ENCODE measurements at regions of chr17 and their contacts with region 1.

Region 1: GRCh38 chr17:81498953-81499600 is 13.5 kb downstream of the ACTG1 start:
- DNase-seq: no peak
- H3K4me3 Mint-ChIP-seq: no peak overlapping the region
- H3K27ac Mint-ChIP-seq: no peak overlapping the region
- H3K4me1 Mint-ChIP-seq: peaks cover 9% of the 10 kb centered on the region
- H3K27me3 Mint-ChIP-seq: peaks cover 28% of the 10 kb centered on the region

Region 2: GRCh38 chr17:81484195-81484979 is 14.7 kb before region 1 on chr17:
- CTCF ChIA-PET with region 1: interaction called, 11 read pairs
- POLR2A ChIA-PET with region 1: no interaction called
- DNase-seq: peak; percentile 88
- H3K4me3 Mint-ChIP-seq: peak overlapping the region; percentile 13
- H3K27ac Mint-ChIP-seq: no peak overlapping the region
- H3K4me1 Mint-ChIP-seq: peaks cover 19% of the 10 kb centered on the region
- H3K27me3 Mint-ChIP-seq: peaks cover 26% of the 10 kb centered on the region

Region 3: DNA sequence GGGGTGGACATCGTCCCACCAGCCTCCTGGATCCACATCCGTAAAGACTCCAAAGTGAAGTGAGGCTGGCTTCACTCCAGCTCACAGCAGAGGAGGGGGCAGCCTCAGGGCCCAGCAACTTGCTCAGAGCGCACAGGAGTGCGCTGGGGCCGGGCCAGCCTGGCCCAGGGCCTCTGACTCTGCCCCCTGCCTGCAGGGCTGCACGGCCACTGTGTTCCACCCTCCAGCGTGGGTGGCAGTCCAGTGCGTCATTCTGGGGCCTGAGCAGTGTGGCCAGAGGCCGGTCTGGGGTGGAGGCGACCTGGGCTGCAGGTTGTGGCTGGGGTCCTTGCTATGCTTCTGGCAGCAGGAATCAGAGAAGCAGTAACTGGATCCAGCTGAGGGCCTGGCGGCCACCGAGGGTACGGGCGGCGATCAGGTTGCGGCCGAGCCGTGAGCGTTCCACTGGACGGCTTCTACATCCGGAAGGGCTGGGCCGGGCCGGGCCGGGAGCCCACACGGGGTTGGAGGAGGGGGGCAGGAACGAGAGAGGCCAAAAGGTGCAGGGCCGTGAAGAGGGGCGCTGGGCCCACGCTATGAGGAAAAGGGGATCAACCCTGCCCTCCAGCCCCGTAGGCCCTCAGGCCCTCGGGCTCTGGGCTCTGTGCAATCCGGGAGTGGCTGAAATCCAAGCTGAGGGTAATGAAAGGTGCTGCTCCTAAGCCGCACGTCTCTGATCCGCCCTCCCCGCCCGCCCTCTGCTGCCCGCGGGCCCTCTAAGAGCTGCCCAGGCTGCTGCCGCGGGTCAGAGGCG is 28.7 kb after region 1 on chr17 and contains the start of gene FSCN2:
- CTCF ChIA-PET with region 1: no interaction called
- POLR2A ChIA-PET with region 1: no interaction called
- DNase-seq: no peak
- H3K4me3 Mint-ChIP-seq: no peak within 1 kb of the TSS
- H3K27ac Mint-ChIP-seq: no peak within 1 kb of the TSS
- H3K4me1 Mint-ChIP-seq: no peaks in the 10 kb centered on the region
- H3K27me3 Mint-ChIP-seq: no peaks in the 10 kb centered on the region
- total RNA-seq, gene FSCN2: 0.22 to 0.33 TPM